ENCODE measurements at regions of chr17 and their contacts with region 1.

Region 1: DNA sequence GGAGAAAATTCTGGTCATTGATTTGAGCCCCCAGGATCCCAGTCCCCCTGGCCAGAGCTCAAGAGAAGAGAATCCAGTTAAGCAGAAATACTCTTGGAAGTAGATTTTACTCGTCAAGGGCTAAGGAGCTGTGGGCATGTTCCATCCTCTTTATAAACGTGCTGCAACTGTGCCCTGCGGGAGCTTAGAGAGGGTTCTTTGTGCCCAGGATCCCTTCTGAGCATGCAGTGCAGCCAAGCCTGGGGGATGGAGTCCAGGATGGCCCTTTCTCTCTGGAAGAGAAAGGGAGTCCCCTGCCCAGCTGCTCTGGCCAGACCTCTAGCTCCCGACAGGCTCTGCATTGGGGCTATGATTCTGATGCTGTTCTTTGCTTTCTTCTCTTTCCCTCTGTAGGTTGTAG is 9.5 kb upstream of the LGALS9 start:
- DNase-seq: no peak
- H3K4me3 ChIP-seq: no peak overlapping the region
- H3K27ac ChIP-seq: no peak overlapping the region
- H3K4me1 ChIP-seq: peaks cover 13% of the 10 kb centered on the region
- H3K27me3 ChIP-seq: no peaks in the 10 kb centered on the region
- CTCF ChIP-seq: no peak
- POLR2A ChIP-seq: no peak

Region 2: DNA sequence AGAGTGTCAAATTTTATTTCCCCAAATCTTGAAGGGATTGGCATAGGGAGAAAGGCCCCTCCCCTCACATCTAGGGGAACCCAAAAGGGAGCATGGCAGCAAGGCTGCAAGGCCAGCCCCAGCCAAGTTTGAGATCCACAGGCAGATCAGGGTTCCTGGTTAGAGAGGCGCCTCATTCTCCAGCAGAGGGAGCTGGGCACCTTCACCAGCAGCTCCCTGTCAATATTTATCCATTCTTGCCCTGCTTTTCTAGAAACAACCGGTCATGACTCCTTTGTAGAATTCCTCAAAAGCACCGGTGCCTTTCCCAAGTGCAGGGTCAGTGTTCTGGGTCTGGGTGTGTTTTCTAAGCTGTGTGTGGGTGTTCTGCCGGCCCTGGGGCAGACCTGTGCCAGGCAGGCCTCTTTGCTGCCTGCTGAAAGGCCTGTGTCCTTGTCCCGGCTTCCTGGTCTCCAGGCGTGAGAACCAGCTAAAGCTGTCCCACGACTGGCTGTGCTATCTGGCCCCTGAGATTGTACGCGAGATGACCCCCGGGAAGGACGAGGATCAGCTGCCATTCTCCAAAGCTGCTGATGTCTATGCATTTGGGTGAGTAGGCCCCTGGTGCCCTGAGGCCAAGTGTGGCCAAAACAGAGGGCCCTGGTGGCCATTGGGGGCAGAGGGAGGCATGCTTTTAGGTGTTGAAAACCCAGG is 11.8 kb before region 1 on chr17:
- CTCF ChIA-PET with region 1: interaction called, 11 read pairs
- POLR2A ChIA-PET with region 1: no interaction called
- dilution Hi-C with region 1: no loop called
- intact Hi-C with region 1: no loop called
- DNase-seq: peak; percentile 34
- H3K4me3 ChIP-seq: no peak overlapping the region
- H3K27ac ChIP-seq: no peak overlapping the region
- H3K4me1 ChIP-seq: no peaks in the 10 kb centered on the region
- H3K27me3 ChIP-seq: no peaks in the 10 kb centered on the region
- CTCF ChIP-seq: peak; percentile 35 to 69
- POLR2A ChIP-seq: no peak

Measured in endothelial cell of umbilical vein (primary cell).